Tibial artery (tissue), 4 donors: ENCODE measurements at regions of chr16 and their contacts with region 1.

Region 1: GRCh38 chr16:88743693-88744576 is 37.6 kb downstream of the CTU2 start:
- DNase-seq: peak; percentile 73 to 84
- H3K4me3 ChIP-seq: no peak overlapping the region
- H3K27ac ChIP-seq: no peak overlapping the region
- H3K4me1 ChIP-seq: peaks cover 0 to 46% (median 4%) of the 10 kb centered on the region in 4 donors
- H3K27me3 ChIP-seq: no peaks in the 10 kb centered on the region
- CTCF ChIP-seq: peak; percentile 80 to 86

Region 2: GRCh38 chr16:89167425-89167941 is 423.5 kb after region 1 on chr16:
- intact Hi-C with region 1: loop called (anchors 5 kb)
- DNase-seq: peak in 1 of 2 donors; percentile 63
- H3K4me3 ChIP-seq: no peak overlapping the region
- H3K27ac ChIP-seq: no peak overlapping the region
- H3K4me1 ChIP-seq: peaks cover 0 to 33% (median 20%) of the 10 kb centered on the region in 4 donors
- H3K27me3 ChIP-seq: peaks cover 6 to 92% of the 10 kb centered on the region in 2 donors
- CTCF ChIP-seq: peak; percentile 50 to 56